CD4-positive, alpha-beta memory T cell (primary cell): ENCODE measurements at regions of chr12 and their contacts with region 1.

Region 1: DNA sequence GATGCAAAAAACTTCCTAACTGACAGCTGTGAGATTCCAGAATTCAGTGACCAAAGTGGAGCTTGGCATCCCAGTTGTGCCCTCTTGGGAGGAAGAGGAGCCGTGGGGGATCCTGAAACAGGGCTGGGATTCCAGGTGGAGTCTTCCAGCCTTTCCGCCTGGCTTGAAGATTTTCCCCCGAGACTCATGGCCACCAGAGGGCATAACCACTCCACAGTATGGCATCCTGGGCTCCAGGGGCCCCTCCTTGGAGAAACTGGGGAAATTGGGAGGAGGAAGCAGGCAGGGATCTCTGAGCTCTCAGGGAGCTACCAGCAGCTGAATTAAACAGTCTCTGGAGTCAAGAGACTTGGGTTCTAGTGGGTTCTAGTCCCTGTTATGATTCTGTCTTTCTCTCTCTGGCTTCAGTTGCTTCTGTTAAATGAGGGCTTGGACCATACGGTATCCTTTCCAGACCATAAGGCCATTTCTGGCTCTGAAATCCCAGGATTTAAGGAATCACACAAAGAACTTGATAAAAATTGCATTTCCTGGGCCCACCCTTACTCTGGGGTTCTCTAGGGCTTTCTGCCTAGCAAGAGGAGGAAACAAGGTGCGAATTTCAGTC is 2.6 kb upstream of the TAMALIN start:
- DNase-seq: no peak
- H3K4me3 ChIP-seq: no peak overlapping the region
- H3K4me3 Mint-ChIP-seq: no peak overlapping the region
- H3K27ac ChIP-seq: no peak overlapping the region
- H3K27ac Mint-ChIP-seq: peak overlapping the region in 2 of 7 donors; percentile 23 to 27
- H3K4me1 ChIP-seq: peaks cover 24% of the 10 kb centered on the region
- H3K4me1 Mint-ChIP-seq: peaks cover 12 to 35% (median 22%) of the 10 kb centered on the region in 4 donors
- H3K27me3 ChIP-seq: no peaks in the 10 kb centered on the region
- H3K27me3 Mint-ChIP-seq: peaks cover 0 to 2% of the 10 kb centered on the region in 2 donors

Region 2: DNA sequence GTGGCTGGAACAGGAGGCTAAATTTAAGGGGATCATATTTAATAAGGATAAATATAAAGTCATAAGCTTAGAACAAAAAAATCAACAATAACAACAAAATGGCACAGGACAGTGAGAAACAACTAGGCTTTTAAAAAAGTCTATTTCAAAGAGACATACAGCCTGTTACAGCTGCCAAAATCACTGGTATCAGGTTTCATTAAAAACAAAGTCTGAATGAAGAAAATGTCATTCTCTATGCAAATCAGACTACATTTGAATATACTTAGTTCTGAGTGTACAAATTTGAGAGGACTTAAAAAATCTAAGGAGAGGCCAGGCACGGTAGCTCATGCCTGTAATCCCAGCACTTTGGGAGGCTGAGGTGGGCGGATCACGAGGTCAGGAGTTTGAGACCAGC is 875.2 kb before region 1 on chr12:
- CTCF ChIA-PET with region 1: no interaction called
- POLR2A ChIA-PET with region 1: no interaction called
- intact Hi-C with region 1: no loop called
- DNase-seq: no peak
- H3K4me3 ChIP-seq: no peak overlapping the region
- H3K4me3 Mint-ChIP-seq: no peak overlapping the region
- H3K27ac ChIP-seq: no peak overlapping the region
- H3K27ac Mint-ChIP-seq: no peak overlapping the region
- H3K4me1 ChIP-seq: no peaks in the 10 kb centered on the region
- H3K4me1 Mint-ChIP-seq: peaks cover 0 to 10% (median 6%) of the 10 kb centered on the region in 4 donors
- H3K27me3 ChIP-seq: no peaks in the 10 kb centered on the region
- H3K27me3 Mint-ChIP-seq: no peaks in the 10 kb centered on the region

Region 3: GRCh38 chr12:52050761-52051541 is 46.8 kb after region 1 on chr12 and contains the start of gene NR4A1:
- CTCF ChIA-PET with region 1: interaction called, 3 read pairs
- POLR2A ChIA-PET with region 1: interaction called, 19 read pairs
- intact Hi-C with region 1: no loop called
- DNase-seq: peak; percentile 98 to 99 (median 99)
- H3K4me3 ChIP-seq: peak within 1 kb of the TSS; percentile 84 to 86
- H3K4me3 Mint-ChIP-seq: peak within 1 kb of the TSS; percentile 87 to 96 (median 92)
- H3K27ac ChIP-seq: peak within 1 kb of the TSS; percentile 95
- H3K27ac Mint-ChIP-seq: peak within 1 kb of the TSS; percentile 98 to 100 (median 99)
- H3K4me1 ChIP-seq: peaks cover 33% of the 10 kb centered on the region
- H3K4me1 Mint-ChIP-seq: peaks cover 18 to 45% (median 31%) of the 10 kb centered on the region in 4 donors
- H3K27me3 ChIP-seq: no peaks in the 10 kb centered on the region
- H3K27me3 Mint-ChIP-seq: no peaks in the 10 kb centered on the region
- total RNA-seq, gene NR4A1: 1.1 to 1.3 TPM

Region 4: GRCh38 chr12:52082988-52083637 is 79.0 kb after region 1 on chr12:
- CTCF ChIA-PET with region 1: interaction called, 10 read pairs
- POLR2A ChIA-PET with region 1: no interaction called
- intact Hi-C with region 1: no loop called
- DNase-seq: peak; percentile 58 to 71 (median 66)
- H3K4me3 ChIP-seq: no peak overlapping the region
- H3K4me3 Mint-ChIP-seq: peak overlapping the region in 1 of 8 donors; percentile 15
- H3K27ac ChIP-seq: no peak overlapping the region
- H3K27ac Mint-ChIP-seq: peak overlapping the region in 5 of 7 donors; percentile 17 to 79 (median 57)
- H3K4me1 ChIP-seq: peaks cover 8% of the 10 kb centered on the region
- H3K4me1 Mint-ChIP-seq: peaks cover 3 to 11% (median 7%) of the 10 kb centered on the region in 4 donors
- H3K27me3 ChIP-seq: no peaks in the 10 kb centered on the region
- H3K27me3 Mint-ChIP-seq: peaks cover 8 to 13% of the 10 kb centered on the region in 2 donors